ENCODE measurements at regions of chr2 and their contacts with region 1.

Region 1: DNA sequence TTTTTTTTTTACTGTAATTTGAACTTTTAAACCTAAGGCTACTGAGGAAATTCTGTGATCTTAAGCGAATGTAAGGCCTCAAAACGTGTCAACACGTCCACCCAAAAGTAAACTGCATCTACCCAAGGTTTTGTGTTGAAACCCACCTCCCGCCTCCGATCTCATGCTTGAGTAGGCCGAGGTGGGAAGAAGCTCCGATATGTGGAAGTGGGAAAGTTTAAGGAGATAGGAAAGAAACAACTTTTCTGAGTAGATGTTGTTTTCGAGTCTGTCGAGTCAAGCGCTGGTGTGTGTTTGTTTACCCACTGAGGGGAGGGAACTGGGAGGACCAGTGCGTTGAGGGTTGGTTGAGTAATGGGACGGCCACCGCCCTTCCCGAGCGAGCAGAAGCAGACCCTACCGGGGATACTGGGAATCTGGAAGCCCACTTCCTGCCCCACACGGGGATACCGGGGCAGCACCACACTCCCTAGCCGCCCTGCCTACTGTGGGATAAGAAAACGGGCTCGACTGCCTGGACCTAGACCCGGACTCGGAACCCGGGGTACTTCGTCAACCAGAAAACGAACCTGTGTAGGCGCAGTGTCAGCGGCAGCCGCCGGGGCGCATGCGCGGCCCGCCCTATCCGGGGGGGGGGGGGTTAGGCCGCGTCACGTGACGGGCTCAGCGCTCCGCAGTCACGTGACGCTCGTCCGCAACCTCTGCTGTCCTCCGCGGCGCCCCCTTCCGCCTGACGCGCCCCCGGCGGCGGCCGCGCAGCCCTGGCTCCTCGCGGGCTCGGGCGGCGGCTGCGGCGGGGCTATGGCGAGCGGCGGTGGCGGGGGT is at the start of gene RETREG2:
- DNase-seq: peak; percentile 89 to 96 (median 93)
- ATAC-seq: peak; percentile 86
- H3K4me3 ChIP-seq: peak within 1 kb of the TSS; percentile 80
- H3K27ac ChIP-seq: peak within 1 kb of the TSS; percentile 97
- H3K4me1 ChIP-seq: peaks cover 9 to 25% of the 10 kb centered on the region in 2 experiments; a peak in 4 of 5 replicates
- H3K27me3 ChIP-seq: no peaks in the 10 kb centered on the region
- CTCF ChIP-seq: peak in 2 of 3 experiments; percentile 42 to 49; a peak in 2 of 6 replicates
- EP300 ChIP-seq: peak; percentile 6; the same call in 1 of the 2 replicates
- POLR2A ChIP-seq: peak; percentile 82
- RAD21 ChIP-seq: no peak
- polyA plus RNA-seq, gene RETREG2: 4.9 to 22.6 TPM

Region 2: DNA sequence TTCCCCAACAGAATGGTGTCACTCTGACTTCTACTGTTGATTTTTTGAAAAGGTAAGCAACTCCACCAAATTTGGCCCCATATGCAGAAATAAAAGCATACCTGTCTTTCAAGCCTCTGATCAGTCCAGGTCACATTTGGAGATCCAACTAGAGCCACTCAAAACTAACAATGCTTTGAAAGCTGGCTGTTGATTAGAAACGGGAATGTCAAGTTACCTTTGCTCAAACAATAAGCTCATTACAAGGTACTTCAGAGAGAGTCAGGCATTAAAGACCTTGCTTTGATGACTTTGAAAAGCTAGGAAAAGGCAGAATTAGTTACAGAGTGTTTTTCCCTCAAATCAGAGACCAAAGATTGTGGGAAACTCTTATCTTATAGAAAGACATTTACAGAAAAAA is 112.3 kb before region 1 on chr2:
- CTCF ChIA-PET with region 1: no interaction called
- POLR2A ChIA-PET with region 1: no interaction called
- in situ Hi-C with region 1: no loop called
- intact Hi-C with region 1: no loop called
- DNase-seq: no peak
- ATAC-seq: no peak
- H3K4me3 ChIP-seq: no peak overlapping the region
- H3K27ac ChIP-seq: no peak overlapping the region
- H3K4me1 ChIP-seq: no peaks in the 10 kb centered on the region
- H3K27me3 ChIP-seq: peaks cover 2 to 8% of the 10 kb centered on the region in 2 experiments; a peak in 2 of 5 replicates
- CTCF ChIP-seq: no peak
- EP300 ChIP-seq: no peak
- POLR2A ChIP-seq: no peak
- RAD21 ChIP-seq: no peak

Region 3: GRCh38 chr2:219142329-219142728 is 35.4 kb before region 1 on chr2:
- CTCF ChIA-PET with region 1: no interaction called
- POLR2A ChIA-PET with region 1: no interaction called
- in situ Hi-C with region 1: no loop called
- intact Hi-C with region 1: no loop called
- DNase-seq: no peak
- ATAC-seq: no peak
- H3K4me3 ChIP-seq: no peak overlapping the region
- H3K27ac ChIP-seq: no peak overlapping the region
- H3K4me1 ChIP-seq: no peaks in the 10 kb centered on the region; a peak in 1 of 5 replicates
- H3K27me3 ChIP-seq: no peaks in the 10 kb centered on the region
- CTCF ChIP-seq: no peak
- EP300 ChIP-seq: no peak
- POLR2A ChIP-seq: no peak
- RAD21 ChIP-seq: no peak

Region 4: DNA sequence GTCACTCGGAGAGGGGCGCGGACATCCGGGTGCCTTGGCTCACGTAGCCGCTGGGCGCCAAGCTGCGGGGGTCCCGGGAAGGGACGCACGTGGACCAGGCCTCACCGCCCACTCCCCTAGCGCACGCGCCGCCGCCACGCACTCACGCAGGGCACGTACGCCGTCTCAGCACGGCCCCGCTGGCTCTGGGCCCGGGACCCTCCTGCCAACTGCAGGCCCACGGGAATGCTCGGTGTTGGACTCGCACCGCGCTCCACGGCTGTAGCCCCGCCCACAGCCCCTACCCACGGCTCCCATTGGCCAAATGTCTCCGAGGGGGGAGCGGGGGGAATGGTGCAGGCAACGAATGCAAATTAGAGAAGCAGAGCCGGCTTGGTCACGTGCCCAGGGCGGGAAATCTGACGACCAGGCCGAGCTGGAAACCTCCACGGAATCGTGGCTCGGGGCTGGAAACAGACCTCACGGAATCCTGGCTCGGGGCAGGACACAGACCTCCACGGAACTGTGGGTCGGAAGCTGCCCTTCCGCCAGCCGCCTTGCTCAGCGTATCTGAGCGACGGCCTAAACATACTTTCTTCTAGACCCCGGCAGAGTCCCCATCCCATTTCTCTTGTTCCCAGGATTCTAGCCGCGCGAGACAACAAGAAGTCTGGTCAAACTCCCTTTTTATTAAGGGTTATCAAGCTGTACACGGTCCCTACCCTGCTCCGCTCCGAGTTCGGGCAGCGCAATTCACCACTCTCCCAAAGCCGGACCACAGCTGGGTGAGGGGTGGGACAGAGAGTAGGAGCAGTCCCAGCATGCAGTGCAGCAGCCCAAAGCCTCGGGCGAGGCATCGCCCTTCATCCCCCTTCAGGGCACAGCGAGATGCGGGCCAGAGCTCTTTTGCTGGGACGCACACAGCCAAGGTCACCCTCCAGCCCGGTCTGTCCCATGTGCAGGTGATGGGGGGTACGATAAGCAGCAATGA is 41.3 kb after region 1 on chr2 and contains the start of gene ABCB6:
- CTCF ChIA-PET with region 1: no interaction called
- POLR2A ChIA-PET with region 1: interaction called, 6 read pairs
- in situ Hi-C with region 1: no loop called
- intact Hi-C with region 1: loop called (anchors 1 kb)
- DNase-seq: peak; percentile 82 to 95 (median 90)
- ATAC-seq: peak; percentile 91
- H3K4me3 ChIP-seq: peak within 1 kb of the TSS; percentile 58
- H3K27ac ChIP-seq: peak within 1 kb of the TSS; percentile 89
- H3K4me1 ChIP-seq: peaks cover 13 to 53% of the 10 kb centered on the region in 2 experiments; a peak in 4 of 5 replicates
- H3K27me3 ChIP-seq: no peaks in the 10 kb centered on the region
- CTCF ChIP-seq: no peak
- EP300 ChIP-seq: no peak
- POLR2A ChIP-seq: peak; percentile 84
- RAD21 ChIP-seq: no peak
- polyA plus RNA-seq, gene ABCB6: 3.7 to 8.1 TPM

Region 5: DNA sequence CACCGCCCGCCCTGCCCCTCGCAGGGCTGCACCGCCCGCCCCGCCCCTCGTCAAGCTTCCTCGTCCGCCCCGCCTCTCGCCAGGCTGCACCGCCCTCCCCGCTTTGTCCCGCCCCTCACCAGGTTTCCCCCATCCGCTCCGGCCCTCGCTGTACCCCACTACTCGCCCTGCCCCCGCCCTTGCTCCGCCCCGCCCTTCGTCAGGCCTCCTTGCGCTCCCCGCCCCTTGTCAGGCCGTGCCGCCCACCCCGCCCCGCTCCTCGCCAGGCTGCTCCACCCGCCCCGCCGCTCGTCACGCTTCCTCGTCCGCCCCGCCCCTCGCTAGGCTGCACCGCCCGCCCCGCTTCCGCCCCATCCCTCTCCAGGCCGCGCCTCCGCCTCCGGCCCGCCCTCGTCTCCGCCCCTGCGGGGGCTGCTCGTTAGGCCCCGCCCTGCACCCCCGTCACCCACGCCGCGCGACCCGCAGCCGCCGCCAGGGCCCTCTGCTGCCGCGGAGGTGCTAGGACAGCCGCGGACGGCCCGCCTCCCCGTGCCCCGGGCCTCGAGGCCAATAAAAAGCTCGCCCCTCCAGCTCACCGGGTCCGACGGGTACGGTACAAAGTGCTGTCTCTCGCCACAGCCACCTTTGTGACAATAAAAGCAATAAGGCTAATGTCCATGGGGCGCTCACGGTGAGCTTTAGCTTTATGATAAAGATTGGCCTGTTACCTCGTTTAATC is 210.5 kb after region 1 on chr2:
- CTCF ChIA-PET with region 1: no interaction called
- POLR2A ChIA-PET with region 1: no interaction called
- in situ Hi-C with region 1: no loop called
- intact Hi-C with region 1: no loop called
- DNase-seq: peak; percentile 93 to 95 (median 94)
- ATAC-seq: peak; percentile 91
- H3K4me3 ChIP-seq: peak overlapping the region; percentile 37
- H3K27ac ChIP-seq: peak overlapping the region; percentile 88
- H3K4me1 ChIP-seq: peaks cover 17 to 27% of the 10 kb centered on the region in 2 experiments; a peak in 4 of 5 replicates
- H3K27me3 ChIP-seq: no peaks in the 10 kb centered on the region
- CTCF ChIP-seq: peak; percentile 58 to 68 (median 59)
- EP300 ChIP-seq: no peak
- POLR2A ChIP-seq: peak; percentile 53
- RAD21 ChIP-seq: no peak

Measured in K562 (cell line).